A673 (cell line): ENCODE measurements at regions of chr2 and their contacts with region 1.

Region 1: DNA sequence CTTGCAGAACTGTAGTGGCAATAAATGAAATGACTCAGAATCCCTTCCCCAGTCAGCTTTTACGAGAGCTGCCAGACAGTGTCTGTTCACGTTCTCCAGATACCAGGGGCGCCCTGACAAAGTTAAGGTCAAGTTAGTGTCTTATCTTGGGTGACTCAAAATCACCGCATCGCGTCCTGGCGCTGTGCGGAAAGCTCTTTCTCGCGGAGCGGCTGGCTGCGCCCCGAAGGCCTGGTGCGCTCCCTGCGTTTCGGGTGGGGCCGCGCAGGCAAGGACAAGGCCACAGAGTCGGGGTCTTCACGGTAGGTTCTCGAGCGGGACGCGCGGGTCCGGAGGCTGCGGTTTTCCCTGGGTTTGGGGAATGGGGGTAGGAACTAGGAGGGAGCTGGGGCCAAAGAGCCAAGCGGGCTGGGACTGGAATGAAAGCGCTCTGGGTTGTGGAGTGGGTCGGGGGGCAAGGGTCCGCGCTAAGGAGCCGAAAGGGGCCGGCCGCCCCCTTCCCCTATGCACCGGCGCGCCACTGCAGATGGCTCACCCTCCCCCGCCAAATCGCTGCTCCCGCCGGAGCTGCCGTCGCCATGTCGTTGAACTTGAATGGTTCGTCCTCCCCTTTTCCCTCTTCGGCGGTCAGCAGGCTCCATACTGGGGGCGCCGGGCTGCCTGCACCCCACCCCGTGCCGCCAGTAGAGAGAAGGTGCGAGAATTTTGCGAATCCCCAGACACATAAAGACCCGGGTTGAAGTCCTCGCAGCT is 2.6 kb upstream of the HOXD11 start:
- DNase-seq: peak; percentile 84
- H3K4me3 ChIP-seq: peak overlapping the region; percentile 73
- H3K27ac ChIP-seq: peak overlapping the region; percentile 94
- H3K4me1 ChIP-seq: peaks cover 29% of the 10 kb centered on the region
- H3K27me3 ChIP-seq: no peaks in the 10 kb centered on the region
- CTCF ChIP-seq: peak; percentile 23; the same call in 1 of the 2 replicates

Region 2: GRCh38 chr2:175877845-175878544 is 226.5 kb before region 1 on chr2:
- CTCF ChIA-PET with region 1: no interaction called
- POLR2A ChIA-PET with region 1: no interaction called
- intact Hi-C with region 1: no loop called
- DNase-seq: peak; percentile 6
- H3K4me3 ChIP-seq: no peak overlapping the region
- H3K27ac ChIP-seq: no peak overlapping the region
- H3K4me1 ChIP-seq: no peaks in the 10 kb centered on the region
- H3K27me3 ChIP-seq: peaks cover 3% of the 10 kb centered on the region
- CTCF ChIP-seq: no peak

Region 3: GRCh38 chr2:176088048-176088936 is 16.2 kb before region 1 on chr2:
- CTCF ChIA-PET with region 1: no interaction called
- POLR2A ChIA-PET with region 1: no interaction called
- intact Hi-C with region 1: no loop called
- DNase-seq: peak; percentile 76
- H3K4me3 ChIP-seq: no peak overlapping the region
- H3K27ac ChIP-seq: no peak overlapping the region
- H3K4me1 ChIP-seq: peaks cover 14% of the 10 kb centered on the region
- H3K27me3 ChIP-seq: peaks cover 27% of the 10 kb centered on the region
- CTCF ChIP-seq: peak; percentile 92

Region 4: GRCh38 chr2:176269319-176270099 is 165.0 kb after region 1 on chr2 and contains the start of gene MTX2:
- CTCF ChIA-PET with region 1: no interaction called
- POLR2A ChIA-PET with region 1: no interaction called
- intact Hi-C with region 1: no loop called
- DNase-seq: peak; percentile 85
- H3K4me3 ChIP-seq: peak within 1 kb of the TSS; percentile 86
- H3K27ac ChIP-seq: peak within 1 kb of the TSS; percentile 95
- H3K4me1 ChIP-seq: peaks cover 11% of the 10 kb centered on the region
- H3K27me3 ChIP-seq: no peaks in the 10 kb centered on the region
- CTCF ChIP-seq: no peak
- total RNA-seq, gene MTX2: 31.1 and 35.1 TPM in 2 replicates

Region 5: DNA sequence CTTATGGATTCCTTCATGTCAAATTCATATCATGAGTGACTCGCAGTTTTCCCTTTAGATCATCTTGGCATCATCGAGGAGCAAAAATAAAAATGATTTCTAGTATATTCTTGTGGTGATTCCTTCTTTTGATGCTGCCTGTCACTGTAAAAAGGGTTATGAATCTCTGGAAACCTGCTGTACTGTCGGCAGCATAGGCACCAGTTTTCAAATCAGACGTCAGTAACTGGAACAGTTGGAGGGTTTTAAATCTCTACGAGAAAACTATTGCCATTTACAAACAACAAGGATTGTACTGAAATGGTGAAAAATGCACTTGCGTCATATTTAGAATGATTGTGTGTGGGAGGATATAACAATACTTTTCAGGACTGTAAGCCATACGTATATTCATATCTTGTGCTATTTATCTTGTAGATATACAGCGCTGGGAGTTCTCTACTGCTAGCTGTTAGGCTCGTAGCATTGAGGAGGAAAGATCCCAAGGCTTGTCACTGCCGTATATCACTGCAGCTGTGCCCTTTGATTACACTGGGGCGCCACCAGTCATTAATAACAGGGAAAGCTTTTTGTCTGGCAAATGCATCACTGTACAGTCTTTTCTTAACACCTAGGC is 485.4 kb after region 1 on chr2:
- CTCF ChIA-PET with region 1: no interaction called
- POLR2A ChIA-PET with region 1: interaction called, 23 read pairs
- intact Hi-C with region 1: no loop called
- DNase-seq: no peak
- H3K4me3 ChIP-seq: no peak overlapping the region
- H3K27ac ChIP-seq: no peak overlapping the region
- H3K4me1 ChIP-seq: no peaks in the 10 kb centered on the region
- H3K27me3 ChIP-seq: no peaks in the 10 kb centered on the region
- CTCF ChIP-seq: no peak